Activated CD4-positive, alpha-beta T cell treated with anti-CD3 and anti-CD28 coated beads, Interleukin-2, amount 10 ng/mL, durations not matched to agents 7 days and 5 days (primary cell): ENCODE measurements at regions of chr1 and their contacts with region 1.

Region 1: GRCh38 chr1:8947127-8947691 is 1.5 kb downstream of the CA6 start:
- DNase-seq: peak; percentile 27
- H3K4me3 Mint-ChIP-seq: peak overlapping the region; percentile 25
- H3K27ac Mint-ChIP-seq: peak overlapping the region; percentile 96
- H3K4me1 Mint-ChIP-seq: peaks cover 84% of the 10 kb centered on the region
- H3K27me3 Mint-ChIP-seq: no peaks in the 10 kb centered on the region

Region 2: DNA sequence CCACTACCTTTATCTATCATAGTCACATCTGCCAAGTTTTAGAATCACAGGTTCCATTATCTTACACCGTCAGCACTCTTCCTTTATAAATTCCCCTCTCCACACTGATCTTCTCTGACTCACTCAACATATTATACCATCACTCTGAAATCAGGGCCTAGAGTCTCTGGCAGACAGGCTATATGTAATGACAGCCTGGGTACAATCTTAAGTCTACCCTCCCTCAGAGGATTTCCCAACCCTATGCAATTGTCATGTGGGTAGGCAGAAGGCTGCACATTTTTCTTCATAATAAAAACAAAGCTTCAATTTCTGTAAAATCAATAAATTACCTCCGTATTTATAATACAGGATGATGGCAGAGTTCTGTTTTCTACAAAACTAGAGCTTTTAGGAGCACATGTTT is 267.8 kb before region 1 on chr1:
- CTCF ChIA-PET with region 1: no interaction called
- POLR2A ChIA-PET with region 1: no interaction called
- DNase-seq: no peak
- H3K4me3 Mint-ChIP-seq: no peak overlapping the region
- H3K27ac Mint-ChIP-seq: no peak overlapping the region
- H3K4me1 Mint-ChIP-seq: peaks cover 27% of the 10 kb centered on the region
- H3K27me3 Mint-ChIP-seq: no peaks in the 10 kb centered on the region

Region 3: DNA sequence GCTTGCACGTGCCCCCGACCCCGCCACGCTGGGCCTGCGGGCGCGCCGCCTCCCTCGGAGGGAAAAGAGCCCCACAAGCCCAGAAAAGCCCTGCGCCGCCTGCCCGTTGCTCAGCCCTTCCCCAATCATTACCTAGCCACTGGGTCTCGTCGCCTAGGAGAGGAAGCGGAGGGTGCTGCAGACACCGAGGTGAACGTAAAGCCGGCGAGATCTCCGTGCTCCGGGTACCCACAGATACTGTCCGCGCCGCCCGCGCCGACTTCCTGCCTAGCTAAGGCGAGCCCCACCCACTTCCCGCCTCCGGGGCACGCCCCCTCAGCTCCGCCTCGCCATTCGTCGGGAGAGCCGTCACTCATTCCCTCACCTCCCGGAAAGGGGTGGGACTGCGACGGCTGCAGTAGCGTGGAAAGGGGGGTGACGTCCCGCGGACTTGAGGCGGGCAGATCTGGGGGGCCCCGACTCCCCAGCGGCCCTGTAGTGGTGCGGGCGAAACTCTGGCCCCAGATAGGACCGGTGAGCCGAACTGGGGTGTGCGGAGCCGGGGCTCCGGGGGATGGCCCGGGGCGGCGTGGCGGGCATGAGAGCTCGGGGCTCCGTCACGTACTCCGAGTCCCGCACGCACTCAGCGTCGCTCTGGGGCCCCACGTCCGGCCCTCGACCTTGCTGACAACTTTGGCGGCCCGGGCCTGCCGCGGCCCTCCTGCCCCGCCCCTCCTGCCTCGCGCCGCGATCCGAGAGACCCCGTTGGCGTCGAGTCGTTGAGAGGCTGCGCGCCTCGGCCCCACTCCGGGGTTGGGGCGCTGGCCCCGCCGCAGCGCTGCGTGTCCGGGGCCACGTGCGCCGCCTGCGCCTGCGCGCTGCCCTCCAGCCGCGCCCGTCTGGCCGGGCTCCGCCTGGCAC is 68.5 kb before region 1 on chr1 and contains the start of gene ENO1:
- CTCF ChIA-PET with region 1: no interaction called
- POLR2A ChIA-PET with region 1: no interaction called
- DNase-seq: peak; percentile 97
- H3K4me3 Mint-ChIP-seq: peak within 1 kb of the TSS; percentile 96
- H3K27ac Mint-ChIP-seq: peak within 1 kb of the TSS; percentile 98
- H3K4me1 Mint-ChIP-seq: peaks cover 44% of the 10 kb centered on the region
- H3K27me3 Mint-ChIP-seq: no peaks in the 10 kb centered on the region
- total RNA-seq, gene ENO1: 1,608 to 1,874 TPM

Region 4: DNA sequence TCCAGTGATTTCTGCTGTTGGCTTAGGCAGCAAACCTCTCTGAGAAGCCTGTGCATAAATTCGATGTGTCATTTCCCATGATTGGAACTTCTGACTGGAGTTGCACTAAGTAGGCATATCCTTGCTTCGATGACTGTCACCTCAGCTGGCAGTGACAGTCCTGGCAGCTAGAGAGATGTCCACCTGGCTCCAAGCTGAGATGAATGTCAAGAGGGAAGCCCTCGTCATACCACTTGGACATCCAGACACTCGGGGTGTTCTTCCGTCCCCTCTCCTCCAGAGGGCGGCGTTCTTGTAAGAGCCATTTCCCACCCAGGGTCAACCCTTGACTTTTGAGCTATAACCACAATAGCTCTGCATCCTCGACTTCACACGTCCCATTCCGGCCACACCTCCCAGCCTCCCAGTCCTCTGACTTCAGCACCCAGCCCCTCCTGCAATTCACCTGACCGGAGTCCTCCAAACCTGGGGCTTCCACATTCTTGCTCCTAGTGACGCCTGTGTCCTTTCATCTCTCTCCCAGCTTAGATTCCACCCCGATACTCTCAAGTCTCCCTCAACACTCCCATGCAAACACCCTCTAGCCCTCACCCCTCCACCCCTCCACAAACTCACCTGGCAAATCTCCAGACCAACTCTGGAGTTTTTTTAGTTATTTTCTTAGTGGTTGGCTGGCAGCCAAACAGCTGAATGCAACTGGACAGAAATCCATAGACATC is 15.8 kb after region 1 on chr1:
- CTCF ChIA-PET with region 1: interaction called, 19 read pairs
- POLR2A ChIA-PET with region 1: interaction called, 3 read pairs
- DNase-seq: peak; percentile 31
- H3K4me3 Mint-ChIP-seq: no peak overlapping the region
- H3K27ac Mint-ChIP-seq: peak overlapping the region; percentile 56
- H3K4me1 Mint-ChIP-seq: peaks cover 78% of the 10 kb centered on the region
- H3K27me3 Mint-ChIP-seq: no peaks in the 10 kb centered on the region